HEK293T (cell line): ENCODE measurements at regions of chr1 and their contacts with region 1.

Region 1: DNA sequence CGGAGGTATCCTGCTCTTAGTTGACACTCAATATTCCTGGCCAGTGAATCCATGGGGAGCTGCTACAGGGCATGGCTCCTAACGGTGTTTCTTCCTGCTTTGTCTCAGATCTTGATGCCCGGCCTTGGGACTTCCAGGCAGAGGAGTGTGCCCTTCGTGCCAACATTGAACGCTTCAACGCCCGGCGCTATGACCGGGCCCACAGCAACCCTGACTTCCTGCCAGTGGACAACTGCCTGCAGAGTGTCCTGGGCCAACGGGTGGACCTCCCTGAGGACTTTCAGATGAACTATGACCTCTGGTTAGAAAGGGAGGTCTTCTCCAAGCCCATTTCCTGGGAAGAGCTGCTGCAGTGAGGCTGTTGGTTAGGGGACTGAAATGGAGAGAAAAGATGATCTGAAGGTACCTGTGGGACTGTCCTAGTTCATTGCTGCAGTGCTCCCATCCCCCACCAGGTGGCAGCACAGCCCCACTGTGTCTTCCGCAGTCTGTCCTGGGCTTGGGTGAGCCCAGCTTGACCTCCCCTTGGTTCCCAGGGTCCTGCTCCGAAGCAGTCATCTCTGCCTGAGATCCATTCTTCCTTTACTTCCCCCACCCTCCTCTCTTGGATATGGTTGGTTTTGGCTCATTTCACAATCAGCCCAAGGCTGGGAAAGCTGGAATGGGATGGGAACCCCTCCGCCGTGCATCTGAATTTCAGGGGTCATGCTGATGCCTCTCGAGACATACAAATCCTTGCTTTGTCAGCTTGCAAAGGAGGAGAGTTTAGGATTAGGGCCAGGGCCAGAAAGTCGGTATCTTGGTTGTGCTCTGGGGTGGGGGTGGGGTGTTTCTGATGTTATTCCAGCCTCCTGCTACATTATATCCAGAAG is 16.7 kb downstream of the ALX3 start:
- DNase-seq: peak; percentile 85

Region 2: GRCh38 chr1:110106013-110106941 is 52.5 kb after region 1 on chr1:
- CTCF ChIA-PET with region 1: interaction called, 34 read pairs
- POLR2A ChIA-PET with region 1: interaction called, 3 read pairs
- DNase-seq: peak; percentile 94